Panc1 (cell line): ENCODE measurements at regions of chr2 and their contacts with region 1.

Region 1: DNA sequence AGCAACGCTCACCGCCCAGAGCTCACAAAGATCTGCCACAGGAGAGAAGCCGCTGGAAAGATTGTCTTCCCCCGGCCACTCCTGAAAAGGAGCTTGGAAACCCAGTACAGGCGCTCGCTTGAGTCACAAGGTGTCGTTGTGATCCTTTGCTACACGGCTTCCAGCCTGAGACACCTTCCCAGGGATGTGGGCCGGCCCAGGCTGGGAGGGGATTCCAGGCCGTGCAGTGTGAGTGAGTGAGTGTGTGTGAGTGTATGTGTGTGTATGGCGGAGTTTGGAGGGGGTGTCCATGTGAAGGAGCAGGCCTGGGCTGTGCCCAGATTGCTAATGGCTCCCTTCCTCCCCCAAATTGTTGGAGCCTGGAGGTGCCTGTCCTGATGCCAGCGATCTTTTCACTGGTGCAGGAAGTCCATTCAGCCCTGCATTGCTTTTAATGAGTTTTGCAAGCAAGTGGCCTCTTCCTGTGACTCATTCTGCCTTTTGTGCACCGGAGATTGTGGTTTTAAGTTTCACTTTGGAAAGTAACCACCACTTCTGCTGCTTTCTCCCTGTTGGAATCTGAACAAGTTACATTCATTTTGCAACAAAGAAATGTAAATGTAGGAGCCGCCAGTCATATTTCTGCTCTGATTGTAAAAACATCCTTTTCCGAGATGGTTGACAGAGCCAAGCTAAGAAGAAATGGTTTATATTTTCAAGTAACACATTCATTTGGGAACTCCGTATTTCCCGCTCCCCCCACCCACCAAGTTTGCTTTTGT is 83.7 kb downstream of the LPIN1 start:
- DNase-seq: peak; percentile 89
- ATAC-seq: peak; percentile 97
- H3K4me3 ChIP-seq: peak overlapping the region; percentile 33 to 53
- H3K27ac ChIP-seq: peak overlapping the region; percentile 98
- H3K4me1 ChIP-seq: peaks cover 22% of the 10 kb centered on the region
- H3K27me3 ChIP-seq: no peaks in the 10 kb centered on the region
- CTCF ChIP-seq: peak; percentile 77

Region 2: GRCh38 chr2:12317814-12318426 is 487.8 kb after region 1 on chr2:
- CTCF ChIA-PET with region 1: no interaction called
- POLR2A ChIA-PET with region 1: no interaction called
- in situ Hi-C with region 1: no loop called
- intact Hi-C with region 1: loop called (anchors 10 kb)
- DNase-seq: no peak
- ATAC-seq: peak; percentile 75
- H3K4me3 ChIP-seq: peak overlapping the region in 1 of 2 experiments; percentile 24; a peak in 1 of 4 replicates
- H3K27ac ChIP-seq: peak overlapping the region; percentile 97
- H3K4me1 ChIP-seq: peaks cover 11% of the 10 kb centered on the region
- H3K27me3 ChIP-seq: no peaks in the 10 kb centered on the region
- CTCF ChIP-seq: peak; percentile 15; the same call in 1 of the 2 replicates

Region 3: GRCh38 chr2:12931186-12931844 is 1101.2 kb after region 1 on chr2:
- CTCF ChIA-PET with region 1: interaction called, 6 read pairs
- POLR2A ChIA-PET with region 1: no interaction called
- in situ Hi-C with region 1: no loop called
- intact Hi-C with region 1: loop called (anchors 5 kb)
- DNase-seq: peak; percentile 51
- ATAC-seq: peak; percentile 92; the same call in 1 of the 2 replicates
- H3K4me3 ChIP-seq: no peak overlapping the region
- H3K27ac ChIP-seq: no peak overlapping the region
- H3K4me1 ChIP-seq: peaks cover 13% of the 10 kb centered on the region; the same call in 1 of the 2 replicates
- H3K27me3 ChIP-seq: no peaks in the 10 kb centered on the region
- CTCF ChIP-seq: peak; percentile 87

Region 4: DNA sequence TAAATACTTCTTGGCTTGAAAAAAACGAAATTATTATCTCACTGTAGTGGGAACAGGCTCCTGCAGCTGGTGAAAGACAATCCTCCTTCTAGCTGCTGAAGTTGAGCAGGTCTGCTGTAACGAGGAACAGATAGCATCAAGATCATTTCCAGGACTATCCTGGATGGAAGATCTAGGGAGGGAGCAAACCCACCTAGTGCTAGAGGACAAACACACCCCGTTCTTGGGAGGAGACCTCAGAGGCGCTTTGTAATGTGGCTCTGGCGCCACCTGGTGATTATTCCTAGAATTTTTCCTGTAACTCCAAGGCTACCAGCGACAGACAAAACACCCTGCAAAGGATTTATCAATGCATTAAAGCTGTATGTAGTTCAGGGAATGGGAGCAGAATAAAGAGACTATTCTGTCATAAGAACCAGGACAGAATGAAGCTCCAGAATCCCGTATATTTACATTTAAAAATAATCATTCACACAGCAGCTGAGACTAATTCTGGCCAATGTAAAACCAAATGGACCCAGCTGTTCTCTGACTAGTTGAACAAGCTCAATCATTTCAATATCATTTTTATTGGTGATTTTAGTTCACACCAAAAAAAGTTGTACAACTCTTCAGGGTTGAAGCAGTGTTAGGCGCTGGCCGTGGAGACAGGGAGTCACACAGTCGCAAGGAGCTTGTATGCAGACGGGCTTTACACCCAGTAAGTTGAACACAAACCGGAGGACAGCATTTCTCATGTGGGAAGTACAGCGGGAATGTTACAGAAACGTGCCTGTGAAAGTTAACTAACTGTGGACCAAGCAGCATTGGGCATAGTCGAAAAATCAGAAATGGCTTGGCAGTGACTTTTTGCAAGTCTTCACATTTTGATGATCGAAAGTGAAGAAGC is 1176.9 kb after region 1 on chr2:
- CTCF ChIA-PET with region 1: interaction called, 16 read pairs
- POLR2A ChIA-PET with region 1: no interaction called
- in situ Hi-C with region 1: no loop called
- intact Hi-C with region 1: loop called (anchors 1 kb)
- DNase-seq: peak; percentile 60
- ATAC-seq: peak; percentile 97
- H3K4me3 ChIP-seq: peak overlapping the region in 1 of 2 experiments; percentile 16; a peak in 2 of 4 replicates
- H3K27ac ChIP-seq: peak overlapping the region; percentile 66
- H3K4me1 ChIP-seq: peaks cover 11% of the 10 kb centered on the region
- H3K27me3 ChIP-seq: no peaks in the 10 kb centered on the region
- CTCF ChIP-seq: peak; percentile 90